CD4-positive, alpha-beta memory T cell (primary cell): ENCODE measurements at regions of chr1 and their contacts with region 1.

Region 1: DNA sequence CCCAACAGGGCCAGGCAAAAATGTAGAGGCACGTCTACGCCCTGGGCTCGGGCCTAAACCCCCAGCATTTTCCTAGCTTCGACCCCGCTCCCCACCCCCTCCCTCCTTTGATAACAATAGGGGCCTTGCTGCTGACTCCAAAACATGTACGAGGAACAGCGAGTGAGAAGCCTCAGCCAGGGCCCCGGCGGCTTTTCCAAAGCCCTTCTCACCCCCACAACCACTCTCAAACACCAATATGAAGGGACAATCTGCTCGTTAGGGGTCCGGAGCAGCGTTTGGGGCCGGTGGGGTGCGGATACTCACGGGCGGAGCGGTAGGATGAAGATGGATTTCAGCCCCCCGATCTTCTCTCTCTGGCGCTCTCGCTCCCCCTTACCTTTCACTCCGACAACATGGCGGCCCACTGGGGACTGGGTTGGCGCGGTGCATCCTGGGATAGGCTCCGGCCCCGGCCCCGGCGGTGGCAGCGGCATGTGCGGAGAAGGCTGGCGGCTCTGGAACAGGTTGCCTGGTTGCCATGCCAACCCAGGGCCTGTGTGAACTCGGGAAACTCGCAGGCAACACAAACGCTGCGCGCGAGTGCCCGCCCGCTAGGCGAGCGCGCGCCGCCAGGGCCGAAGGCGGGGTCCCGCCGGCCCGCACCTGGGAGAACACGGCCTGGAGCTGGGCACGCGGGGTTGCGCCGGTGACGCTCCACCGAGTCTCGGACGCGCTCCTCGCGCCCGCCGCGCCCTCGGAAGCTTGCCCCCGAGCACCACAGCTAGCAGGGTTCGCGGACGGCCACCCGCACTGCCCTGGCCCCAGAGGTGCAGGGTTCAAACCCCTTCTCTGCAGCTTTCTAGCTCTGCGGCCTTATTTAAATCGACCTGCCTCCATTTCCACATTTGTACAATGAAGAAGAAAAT is at the start of gene PUM1:
- DNase-seq: peak; percentile 97 to 99 (median 98)
- H3K4me3 ChIP-seq: peak within 1 kb of the TSS; percentile 76 to 100
- H3K4me3 Mint-ChIP-seq: peak within 1 kb of the TSS; percentile 92 to 100 (median 98)
- H3K27ac ChIP-seq: peak within 1 kb of the TSS; percentile 99
- H3K27ac Mint-ChIP-seq: peak within 1 kb of the TSS; percentile 95 to 100 (median 99)
- H3K4me1 ChIP-seq: peaks cover 37% of the 10 kb centered on the region
- H3K4me1 Mint-ChIP-seq: peaks cover 13 to 49% (median 26%) of the 10 kb centered on the region in 4 donors
- H3K27me3 ChIP-seq: no peaks in the 10 kb centered on the region
- H3K27me3 Mint-ChIP-seq: no peaks in the 10 kb centered on the region
- total RNA-seq, gene PUM1: 146 to 164 TPM

Region 2: GRCh38 chr1:30756545-30757195 is 308.9 kb before region 1 on chr1:
- CTCF ChIA-PET with region 1: no interaction called
- POLR2A ChIA-PET with region 1: no interaction called
- intact Hi-C with region 1: loop called (anchors 10 kb)
- DNase-seq: peak; percentile 69 to 94 (median 75)
- H3K4me3 ChIP-seq: peak overlapping the region; percentile 96
- H3K4me3 Mint-ChIP-seq: peak overlapping the region; percentile 97 to 100 (median 100)
- H3K27ac ChIP-seq: peak overlapping the region; percentile 92
- H3K27ac Mint-ChIP-seq: peak overlapping the region; percentile 95 to 100 (median 98)
- H3K4me1 ChIP-seq: peaks cover 84% of the 10 kb centered on the region
- H3K4me1 Mint-ChIP-seq: peaks cover 57 to 100% (median 69%) of the 10 kb centered on the region in 4 donors
- H3K27me3 ChIP-seq: no peaks in the 10 kb centered on the region
- H3K27me3 Mint-ChIP-seq: no peaks in the 10 kb centered on the region

Region 3: DNA sequence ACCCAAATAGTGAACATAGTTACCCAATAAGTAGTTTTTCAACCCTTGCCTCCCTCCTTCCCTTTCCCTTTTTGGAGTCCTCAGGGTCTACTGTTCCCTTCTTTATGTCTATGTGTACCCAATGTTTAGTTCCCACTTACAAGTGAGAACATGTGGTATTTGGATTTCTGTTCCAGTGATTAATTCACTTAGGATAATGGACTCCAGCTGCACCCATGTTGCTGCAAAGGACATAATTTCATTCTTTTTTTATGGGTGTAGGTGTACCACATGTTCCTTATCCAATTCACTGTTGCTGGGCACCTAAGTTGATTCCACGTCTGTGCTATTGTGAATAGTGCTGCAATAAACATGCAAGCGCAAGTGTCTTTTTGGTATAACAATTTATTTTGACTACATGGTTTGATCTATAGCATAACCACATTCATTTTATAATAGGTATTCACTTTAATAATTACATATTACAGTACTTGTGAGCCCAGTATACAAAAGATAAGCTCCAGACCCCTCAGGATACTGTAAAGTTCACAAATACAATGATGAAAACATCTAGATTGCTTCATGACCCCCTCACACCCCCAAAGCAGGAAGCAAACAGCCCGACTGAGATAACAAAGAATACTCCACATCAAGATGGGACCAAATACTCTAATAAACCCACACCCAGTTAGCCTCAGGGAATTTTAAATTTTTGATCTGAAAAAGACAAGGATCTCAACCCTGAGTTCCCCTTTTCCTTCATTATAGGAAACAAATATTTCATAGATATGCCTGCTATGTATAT is 45.4 kb before region 1 on chr1:
- CTCF ChIA-PET with region 1: interaction called, 3 read pairs
- POLR2A ChIA-PET with region 1: interaction called, 5 read pairs
- intact Hi-C with region 1: loop called (anchors 5 kb)
- DNase-seq: no peak
- H3K4me3 ChIP-seq: no peak overlapping the region
- H3K4me3 Mint-ChIP-seq: peak overlapping the region in 5 of 8 donors; percentile 33 to 74 (median 57)
- H3K27ac ChIP-seq: no peak overlapping the region
- H3K27ac Mint-ChIP-seq: peak overlapping the region; percentile 15 to 68 (median 45)
- H3K4me1 ChIP-seq: peaks cover 68% of the 10 kb centered on the region
- H3K4me1 Mint-ChIP-seq: peaks cover 52 to 83% (median 68%) of the 10 kb centered on the region in 4 donors
- H3K27me3 ChIP-seq: no peaks in the 10 kb centered on the region
- H3K27me3 Mint-ChIP-seq: no peaks in the 10 kb centered on the region

Region 4: DNA sequence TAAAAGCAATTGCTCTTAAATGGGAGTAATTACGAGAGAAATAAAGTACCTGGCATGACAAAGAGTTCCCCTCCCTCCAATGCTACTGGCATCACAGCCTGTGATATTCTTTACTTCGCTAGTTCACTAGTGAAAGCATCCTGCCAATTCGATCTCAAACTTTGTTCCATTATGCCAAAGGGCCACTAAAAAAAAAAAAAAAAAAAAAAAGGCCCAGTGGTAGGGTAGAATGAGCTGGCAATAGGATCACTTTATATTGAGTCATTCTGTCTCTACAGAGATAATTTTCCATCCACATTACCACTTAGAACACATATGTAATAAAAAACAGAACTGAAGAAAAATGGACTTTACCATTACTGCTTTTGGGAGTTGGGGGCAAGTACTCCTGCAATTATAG is 11.2 kb before region 1 on chr1:
- CTCF ChIA-PET with region 1: no interaction called
- POLR2A ChIA-PET with region 1: interaction called, 11 read pairs
- intact Hi-C with region 1: no loop called
- DNase-seq: no peak
- H3K4me3 ChIP-seq: no peak overlapping the region
- H3K4me3 Mint-ChIP-seq: peak overlapping the region in 3 of 8 donors; percentile 10 to 79 (median 70)
- H3K27ac ChIP-seq: no peak overlapping the region
- H3K27ac Mint-ChIP-seq: peak overlapping the region in 3 of 7 donors; percentile 30 to 72 (median 55)
- H3K4me1 ChIP-seq: peaks cover 62% of the 10 kb centered on the region
- H3K4me1 Mint-ChIP-seq: peaks cover 39 to 77% (median 62%) of the 10 kb centered on the region in 4 donors
- H3K27me3 ChIP-seq: no peaks in the 10 kb centered on the region
- H3K27me3 Mint-ChIP-seq: no peaks in the 10 kb centered on the region

Region 5: GRCh38 chr1:31155216-31155841 is 89.8 kb after region 1 on chr1:
- CTCF ChIA-PET with region 1: no interaction called
- POLR2A ChIA-PET with region 1: no interaction called
- intact Hi-C with region 1: loop called (anchors 2 kb)
- DNase-seq: peak; percentile 37 to 66 (median 39)
- H3K4me3 ChIP-seq: peak overlapping the region; percentile 57 to 61
- H3K4me3 Mint-ChIP-seq: peak overlapping the region; percentile 83 to 91 (median 88)
- H3K27ac ChIP-seq: peak overlapping the region; percentile 37
- H3K27ac Mint-ChIP-seq: peak overlapping the region in 6 of 7 donors; percentile 24 to 89 (median 72)
- H3K4me1 ChIP-seq: peaks cover 10% of the 10 kb centered on the region
- H3K4me1 Mint-ChIP-seq: peaks cover 9 to 13% (median 12%) of the 10 kb centered on the region in 4 donors
- H3K27me3 ChIP-seq: no peaks in the 10 kb centered on the region
- H3K27me3 Mint-ChIP-seq: no peaks in the 10 kb centered on the region

Region 6: GRCh38 chr1:31296486-31297276 is 231.1 kb after region 1 on chr1 and contains the starts of genes SNRNP40 and ZCCHC17:
- CTCF ChIA-PET with region 1: no interaction called
- POLR2A ChIA-PET with region 1: interaction called, 4 read pairs
- intact Hi-C with region 1: loop called (anchors 1 kb)
- DNase-seq: peak; percentile 96 to 99 (median 98)
- H3K4me3 ChIP-seq: peak within 1 kb of the TSS; percentile 89 to 98
- H3K4me3 Mint-ChIP-seq: no peak within 1 kb of the TSS
- H3K27ac ChIP-seq: peak within 1 kb of the TSS; percentile 85
- H3K27ac Mint-ChIP-seq: peak within 1 kb of the TSS in 1 of 7 donors; percentile 69
- H3K4me1 ChIP-seq: peaks cover 38% of the 10 kb centered on the region
- H3K4me1 Mint-ChIP-seq: peaks cover 25 to 27% (median 26%) of the 10 kb centered on the region in 4 donors
- H3K27me3 ChIP-seq: no peaks in the 10 kb centered on the region
- H3K27me3 Mint-ChIP-seq: no peaks in the 10 kb centered on the region
- total RNA-seq, gene SNRNP40: 58.7 to 67.0 TPM
- total RNA-seq, gene ZCCHC17: 20.2 to 21.8 TPM